HAP-1 (cell line): ENCODE measurements at regions of chr2 and their contacts with region 1.

Region 1: DNA sequence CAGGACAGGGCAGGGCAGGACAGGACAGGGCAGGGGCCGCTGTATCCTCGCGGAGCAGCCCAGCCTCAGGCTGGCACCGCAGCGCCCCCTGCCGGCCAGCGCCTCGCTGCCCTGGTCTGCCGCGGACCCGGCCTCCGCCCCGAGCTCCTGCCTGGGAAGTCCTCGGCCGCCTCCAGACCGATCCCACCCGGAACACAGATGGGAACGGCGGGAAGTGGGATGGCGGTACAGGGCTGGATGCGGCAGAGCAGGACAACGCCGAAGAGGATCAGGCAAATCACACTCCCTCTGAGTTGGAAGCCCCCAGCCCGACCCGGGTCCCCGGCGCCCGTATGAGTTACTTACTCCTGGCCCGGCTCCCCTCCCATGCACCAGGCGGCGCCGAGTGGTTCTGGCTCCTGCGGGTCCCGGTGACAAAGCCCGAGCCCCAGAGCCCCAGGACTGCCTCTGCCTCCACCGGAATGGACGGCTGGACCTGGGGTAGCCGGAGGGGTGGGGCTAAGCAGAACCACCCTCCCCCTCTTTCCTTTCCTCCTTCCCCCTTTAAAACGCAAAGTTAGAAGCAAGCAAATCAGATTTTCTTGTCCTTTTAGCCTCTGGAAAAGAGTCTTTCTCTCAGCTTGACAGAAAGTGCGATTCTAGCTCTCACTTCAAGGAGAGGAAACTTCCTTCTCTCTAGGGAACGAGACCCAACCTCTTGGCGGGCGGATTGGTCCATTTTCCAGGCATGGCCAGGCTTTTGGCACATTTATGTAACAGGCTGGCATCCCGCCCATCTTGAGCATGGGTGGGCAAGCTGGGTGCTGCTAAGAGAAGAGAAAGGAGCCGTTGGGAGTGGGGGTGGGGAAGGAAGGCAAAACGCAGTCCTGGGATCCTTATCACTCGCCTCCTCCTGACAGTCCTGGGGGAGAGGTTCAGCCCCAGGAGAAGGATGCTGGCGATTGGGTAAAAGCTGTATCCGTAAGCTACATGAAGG is at the start of gene TP53I3:
- DNase-seq: peak; percentile 84 to 92
- H3K4me3 ChIP-seq: peak within 1 kb of the TSS; percentile 47
- H3K4me1 ChIP-seq: peaks cover 8% of the 10 kb centered on the region
- H3K27me3 ChIP-seq: no peaks in the 10 kb centered on the region

Region 2: GRCh38 chr2:23809150-23809549 is 275.5 kb before region 1 on chr2:
- in situ Hi-C with region 1: no loop called
- DNase-seq: no peak
- H3K4me3 ChIP-seq: no peak overlapping the region
- H3K4me1 ChIP-seq: no peaks in the 10 kb centered on the region
- H3K27me3 ChIP-seq: no peaks in the 10 kb centered on the region

Region 3: GRCh38 chr2:23926750-23927571 is 157.7 kb before region 1 on chr2 and contains the start of gene ATAD2B:
- in situ Hi-C with region 1: loop called (anchors 10 kb)
- DNase-seq: peak; percentile 89 to 94
- H3K4me3 ChIP-seq: peak within 1 kb of the TSS; percentile 90
- H3K4me1 ChIP-seq: peaks cover 10% of the 10 kb centered on the region
- H3K27me3 ChIP-seq: no peaks in the 10 kb centered on the region

Region 4: GRCh38 chr2:24123195-24123921 is 38.7 kb after region 1 on chr2 and contains the starts of genes FAM228B and PFN4:
- in situ Hi-C with region 1: no loop called
- DNase-seq: peak; percentile 57 to 86
- H3K4me3 ChIP-seq: peak within 1 kb of the TSS; percentile 46
- H3K4me1 ChIP-seq: peaks cover 5% of the 10 kb centered on the region; the same call in 1 of the 2 replicates
- H3K27me3 ChIP-seq: no peaks in the 10 kb centered on the region